Activated naive CD4-positive, alpha-beta T cell treated with anti-CD3 and anti-CD28 coated beads for 36 hours (primary cell): ENCODE measurements at regions of chr11 and their contacts with region 1.

Region 1: GRCh38 chr11:118768690-118769089 is 22.3 kb downstream of the DDX6 start:
- DNase-seq: no peak
- H3K4me3 Mint-ChIP-seq: no peak overlapping the region
- H3K27ac Mint-ChIP-seq: peak overlapping the region; percentile 64
- H3K4me1 Mint-ChIP-seq: peaks cover 58% of the 10 kb centered on the region
- H3K27me3 Mint-ChIP-seq: no peaks in the 10 kb centered on the region

Region 2: DNA sequence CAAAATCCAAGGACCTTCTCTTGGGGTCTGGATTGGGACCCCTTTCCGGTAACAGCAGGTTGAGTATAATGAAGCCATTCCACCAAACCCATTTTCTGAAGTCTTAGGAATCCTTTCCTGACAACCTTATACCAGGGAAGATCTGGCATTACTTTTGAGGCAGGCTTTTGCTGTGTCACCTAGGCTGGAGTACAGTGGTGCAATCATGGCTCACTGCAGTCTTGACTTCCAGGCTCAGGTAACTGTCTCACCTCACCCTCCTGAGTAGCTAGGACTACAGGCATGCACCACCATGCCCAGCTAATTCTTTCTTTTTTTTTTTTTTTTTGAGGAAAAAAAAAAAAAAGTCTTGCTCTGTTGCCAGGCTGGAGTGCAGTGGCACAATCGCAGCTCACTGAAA is 33.5 kb before region 1 on chr11:
- CTCF ChIA-PET with region 1: no interaction called
- intact Hi-C with region 1: no loop called
- DNase-seq: no peak
- H3K4me3 Mint-ChIP-seq: no peak overlapping the region
- H3K27ac Mint-ChIP-seq: no peak overlapping the region
- H3K4me1 Mint-ChIP-seq: no peaks in the 10 kb centered on the region
- H3K27me3 Mint-ChIP-seq: no peaks in the 10 kb centered on the region

Region 3: GRCh38 chr11:118778898-118779297 is 10.2 kb after region 1 on chr11:
- CTCF ChIA-PET with region 1: no interaction called
- intact Hi-C with region 1: loop called (anchors 2 kb)
- DNase-seq: no peak
- H3K4me3 Mint-ChIP-seq: no peak overlapping the region
- H3K27ac Mint-ChIP-seq: no peak overlapping the region
- H3K4me1 Mint-ChIP-seq: peaks cover 71% of the 10 kb centered on the region
- H3K27me3 Mint-ChIP-seq: no peaks in the 10 kb centered on the region